Lower leg skin (tissue), 4 donors: ENCODE measurements at regions of chr7 and their contacts with region 1.

Region 1: DNA sequence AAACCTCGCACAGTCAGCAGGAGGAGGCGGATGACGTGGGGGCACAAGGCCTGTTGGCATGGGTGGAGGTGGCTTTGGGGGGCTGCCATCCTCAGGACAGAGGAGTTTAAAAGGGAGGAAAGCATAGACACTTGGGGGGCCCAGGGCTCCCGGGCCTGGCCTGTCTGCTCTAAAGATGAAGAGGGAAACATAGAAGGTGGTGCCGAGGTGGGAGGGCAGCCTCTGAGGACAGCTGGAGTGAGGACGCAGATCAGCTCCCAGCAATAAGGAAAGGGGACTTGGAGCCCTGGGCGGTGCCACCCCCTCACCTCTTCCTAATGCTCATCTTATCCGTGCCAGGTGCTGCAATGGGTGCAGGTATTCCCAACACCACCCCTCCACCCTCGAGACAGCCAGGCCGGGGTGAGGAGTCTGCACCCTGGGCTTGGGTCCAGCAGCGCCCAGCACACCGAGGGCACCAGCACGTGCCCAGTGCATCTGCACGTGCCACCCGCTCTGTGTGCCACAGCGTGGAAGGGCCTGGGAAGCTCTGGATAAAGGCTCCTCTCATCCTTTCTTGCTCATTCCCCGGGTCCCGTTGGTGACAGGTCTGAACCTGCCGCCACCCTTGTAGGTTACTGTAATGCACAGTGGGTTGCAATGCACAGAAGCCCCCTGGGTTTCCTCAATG is 566.0 kb upstream of the FOXK1 start:
- DNase-seq: no peak
- H3K4me3 ChIP-seq: no peak overlapping the region
- CTCF ChIP-seq: no peak
- POLR2A ChIP-seq: no peak

Region 2: DNA sequence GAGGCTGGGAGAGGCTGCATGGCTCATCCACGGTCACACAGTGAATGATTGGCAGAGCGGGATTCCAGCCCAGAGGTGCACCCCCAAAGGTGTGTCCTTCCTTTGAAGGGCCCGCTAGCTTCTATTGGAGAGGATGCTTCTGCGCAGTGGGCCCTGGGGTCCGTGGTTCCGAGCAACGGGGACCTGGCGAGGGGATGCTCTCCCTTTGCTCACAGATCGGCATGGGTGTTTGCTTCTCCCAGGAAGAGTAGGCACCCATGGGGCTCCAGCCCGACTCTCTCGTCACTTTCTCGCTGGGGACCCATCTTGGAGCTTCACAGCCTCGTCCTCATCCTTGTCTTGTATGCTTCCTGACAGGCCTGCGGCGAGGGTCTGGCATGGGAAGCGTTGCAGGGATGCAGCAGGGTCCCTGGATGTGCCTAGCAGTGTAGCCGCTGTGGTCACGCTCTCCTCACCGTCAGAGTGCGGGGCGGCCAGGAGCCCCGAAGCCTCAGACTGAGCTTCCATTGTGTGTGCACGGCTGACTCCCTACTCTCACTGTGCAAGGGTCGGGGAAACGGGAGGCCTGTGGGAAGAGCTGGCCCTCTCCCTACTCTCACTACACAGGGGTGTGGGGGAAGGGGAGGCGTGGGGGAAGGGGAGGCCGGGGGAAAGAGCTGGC is 27.6 kb after region 1 on chr7:
- intact Hi-C with region 1: loop called (anchors 2 kb)
- DNase-seq: no peak
- H3K4me3 ChIP-seq: no peak overlapping the region
- CTCF ChIP-seq: no peak
- POLR2A ChIP-seq: no peak